Right cardiac atrium (tissue), 5 donors: ENCODE measurements at regions of chr5 and their contacts with region 1.

Region 1: DNA sequence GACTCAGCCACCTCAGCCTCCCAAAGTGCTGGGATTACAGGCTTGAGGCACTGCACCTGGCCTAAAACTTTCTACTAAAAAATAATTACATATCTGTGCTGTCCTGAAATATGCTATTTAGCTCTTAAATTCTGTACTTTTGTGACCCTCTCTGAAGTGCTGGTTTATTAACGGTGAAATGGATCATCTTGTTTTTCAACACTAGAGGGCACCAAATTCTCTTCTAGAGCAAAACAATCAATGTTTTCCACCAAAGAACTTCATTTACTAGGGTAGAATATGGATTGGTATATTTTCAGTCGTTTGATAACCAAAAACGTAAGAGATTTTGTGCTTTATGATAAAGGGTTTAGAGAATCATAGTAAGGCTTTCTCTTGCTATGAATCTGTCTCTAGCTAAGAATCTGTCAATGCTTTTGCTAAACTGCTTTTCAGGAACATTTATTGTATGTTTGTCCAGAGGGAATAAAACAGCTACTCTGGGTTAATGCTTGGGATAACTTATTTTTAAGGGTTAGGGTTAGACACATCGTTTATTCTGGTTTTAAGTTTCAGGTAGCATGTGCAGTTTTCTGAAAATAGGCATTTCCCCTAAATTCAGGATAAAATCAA is 63.6 kb downstream of the RNF180 start:
- DNase-seq: no peak
- ATAC-seq: peak in 1 of 2 donors; percentile 18
- H3K4me3 ChIP-seq: no peak overlapping the region
- H3K27ac ChIP-seq: no peak overlapping the region
- H3K4me1 ChIP-seq: no peaks in the 10 kb centered on the region
- H3K27me3 ChIP-seq: no peaks in the 10 kb centered on the region

Region 2: DNA sequence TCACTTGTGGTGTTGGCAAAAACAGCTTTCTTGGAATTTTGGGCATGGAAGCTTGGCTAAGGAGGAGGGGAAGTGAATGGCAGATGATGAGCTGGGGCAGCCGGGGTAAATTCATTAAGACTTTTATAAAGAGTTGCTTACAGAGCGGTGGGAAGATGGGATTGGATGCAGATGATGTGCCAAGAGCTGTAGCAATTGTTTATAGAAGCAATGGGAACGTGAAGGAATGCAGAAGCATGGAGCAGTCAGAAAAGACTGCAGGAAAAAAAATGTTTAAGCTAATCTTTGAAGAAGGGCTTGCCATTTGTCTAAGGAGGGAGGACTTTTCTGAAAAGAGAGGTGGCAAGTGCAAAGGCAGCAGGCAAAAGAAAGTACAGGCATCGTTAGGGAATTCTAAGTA is 374.4 kb after region 1 on chr5:
- intact Hi-C with region 1: loop called in 1 of 4 experiments (anchors 10 kb)
- DNase-seq: no peak
- ATAC-seq: no peak
- H3K4me3 ChIP-seq: no peak overlapping the region
- H3K27ac ChIP-seq: no peak overlapping the region
- H3K4me1 ChIP-seq: no peaks in the 10 kb centered on the region
- H3K27me3 ChIP-seq: no peaks in the 10 kb centered on the region

Region 3: GRCh38 chr5:65434122-65434521 is 1204.9 kb after region 1 on chr5:
- intact Hi-C with region 1: no loop called
- DNase-seq: no peak
- ATAC-seq: no peak
- H3K4me3 ChIP-seq: no peak overlapping the region
- H3K27ac ChIP-seq: no peak overlapping the region
- H3K4me1 ChIP-seq: no peaks in the 10 kb centered on the region
- H3K27me3 ChIP-seq: no peaks in the 10 kb centered on the region